ENCODE measurements at regions of chr17 and their contacts with region 1.

Region 1: DNA sequence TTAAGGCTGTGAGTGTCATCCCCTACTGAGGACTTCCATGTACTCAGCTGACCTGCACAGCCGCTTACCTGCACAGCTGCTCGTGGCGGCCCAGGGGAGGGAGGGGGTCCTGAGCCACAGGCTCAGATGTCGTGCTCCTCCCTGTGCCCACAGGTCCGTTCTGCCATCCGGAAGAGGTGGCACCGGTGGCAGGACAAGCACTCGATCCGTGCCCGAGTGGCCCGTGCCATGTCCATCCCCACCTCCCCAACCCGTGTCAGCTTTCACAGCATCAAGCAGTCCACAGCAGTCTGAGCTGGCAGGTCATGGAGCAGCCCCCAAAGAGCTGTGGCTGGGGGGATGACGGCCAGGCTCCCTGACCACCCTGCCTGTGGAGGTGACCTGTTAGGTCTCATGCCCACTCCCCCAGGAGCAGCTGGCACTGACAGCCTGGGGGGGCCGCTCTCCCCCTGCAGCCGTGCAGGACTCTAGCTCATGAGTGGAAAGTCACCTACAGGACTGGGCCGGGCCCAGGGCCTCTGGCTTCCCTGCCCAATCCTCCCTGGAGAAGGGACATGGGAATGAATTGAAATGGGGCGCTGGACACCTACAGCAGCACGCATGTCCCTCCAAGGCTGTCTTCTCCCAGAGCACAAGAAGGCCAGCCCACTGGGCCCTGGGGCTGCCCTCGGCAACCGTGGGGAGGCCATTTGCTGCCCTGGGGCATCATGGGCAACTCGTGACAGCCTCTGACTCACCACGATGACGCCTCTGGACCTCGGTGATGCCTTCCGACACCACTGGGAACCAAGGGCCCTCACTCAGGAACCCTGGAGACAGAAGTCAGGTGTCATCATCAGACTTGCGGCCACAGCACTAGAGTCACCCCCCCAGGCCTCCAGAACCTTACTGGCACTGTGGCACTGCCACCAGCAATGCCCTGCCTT is 9.9 kb upstream of the SPPL2C start:
- DNase-seq: no peak
- H3K4me3 ChIP-seq: no peak overlapping the region
- H3K27ac ChIP-seq: no peak overlapping the region
- H3K4me1 ChIP-seq: peaks cover 0 to 3% (median 0%) of the 10 kb centered on the region in 3 donors
- H3K27me3 ChIP-seq: peaks cover 0 to 54% (median 0%) of the 10 kb centered on the region in 4 donors
- CTCF ChIP-seq: no peak
- POLR2A ChIP-seq: no peak

Region 2: GRCh38 chr17:45394913-45395568 is 439.7 kb before region 1 on chr17:
- intact Hi-C with region 1: loop called (anchors 10 kb)
- DNase-seq: no peak
- H3K4me3 ChIP-seq: peak overlapping the region in 3 of 4 donors; percentile 10 to 53 (median 12)
- H3K27ac ChIP-seq: no peak overlapping the region
- H3K4me1 ChIP-seq: peaks cover 0 to 21% (median 3%) of the 10 kb centered on the region in 3 donors
- H3K27me3 ChIP-seq: no peaks in the 10 kb centered on the region
- CTCF ChIP-seq: peak; percentile 58 to 75 (median 64)
- POLR2A ChIP-seq: no peak

Region 3: GRCh38 chr17:45640141-45640850 is 194.4 kb before region 1 on chr17:
- intact Hi-C with region 1: loop called (anchors 5 kb)
- DNase-seq: no peak
- H3K4me3 ChIP-seq: no peak overlapping the region
- H3K27ac ChIP-seq: peak overlapping the region in 1 of 4 donors; percentile 77
- H3K4me1 ChIP-seq: peaks cover 0 to 15% (median 0%) of the 10 kb centered on the region in 3 donors
- H3K27me3 ChIP-seq: peaks cover 0 to 6% (median 0%) of the 10 kb centered on the region in 4 donors
- CTCF ChIP-seq: peak; percentile 89 to 94 (median 92)
- POLR2A ChIP-seq: no peak

Region 4: DNA sequence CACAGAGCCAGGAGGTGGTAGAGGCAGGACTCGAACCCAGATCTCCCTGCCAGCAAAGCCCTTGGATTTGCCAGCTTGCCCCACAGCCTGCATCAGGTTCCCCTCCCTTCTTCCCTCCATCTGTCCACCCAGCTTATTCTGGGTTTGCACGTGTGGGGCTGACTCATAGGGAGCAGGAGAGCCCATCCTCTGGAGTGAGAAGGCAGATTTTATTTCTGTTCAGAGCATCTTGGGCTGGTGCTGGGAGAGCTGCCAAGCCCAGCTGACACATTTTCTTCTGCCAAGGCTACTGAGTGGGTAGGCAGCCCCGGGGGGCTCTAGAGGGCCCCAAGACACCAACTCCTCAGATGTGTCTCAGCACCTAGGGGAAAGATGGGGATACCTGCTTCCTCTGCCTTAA is 157.0 kb before region 1 on chr17:
- intact Hi-C with region 1: no loop called
- DNase-seq: no peak
- H3K4me3 ChIP-seq: no peak overlapping the region
- H3K27ac ChIP-seq: no peak overlapping the region
- H3K4me1 ChIP-seq: no peaks in the 10 kb centered on the region
- H3K27me3 ChIP-seq: peaks cover 0 to 35% (median 0%) of the 10 kb centered on the region in 4 donors
- CTCF ChIP-seq: no peak
- POLR2A ChIP-seq: no peak

Measured in esophagus squamous epithelium (tissue), 5 donors.